ENCODE measurements at regions of chr15 and their contacts with region 1.

Region 1: DNA sequence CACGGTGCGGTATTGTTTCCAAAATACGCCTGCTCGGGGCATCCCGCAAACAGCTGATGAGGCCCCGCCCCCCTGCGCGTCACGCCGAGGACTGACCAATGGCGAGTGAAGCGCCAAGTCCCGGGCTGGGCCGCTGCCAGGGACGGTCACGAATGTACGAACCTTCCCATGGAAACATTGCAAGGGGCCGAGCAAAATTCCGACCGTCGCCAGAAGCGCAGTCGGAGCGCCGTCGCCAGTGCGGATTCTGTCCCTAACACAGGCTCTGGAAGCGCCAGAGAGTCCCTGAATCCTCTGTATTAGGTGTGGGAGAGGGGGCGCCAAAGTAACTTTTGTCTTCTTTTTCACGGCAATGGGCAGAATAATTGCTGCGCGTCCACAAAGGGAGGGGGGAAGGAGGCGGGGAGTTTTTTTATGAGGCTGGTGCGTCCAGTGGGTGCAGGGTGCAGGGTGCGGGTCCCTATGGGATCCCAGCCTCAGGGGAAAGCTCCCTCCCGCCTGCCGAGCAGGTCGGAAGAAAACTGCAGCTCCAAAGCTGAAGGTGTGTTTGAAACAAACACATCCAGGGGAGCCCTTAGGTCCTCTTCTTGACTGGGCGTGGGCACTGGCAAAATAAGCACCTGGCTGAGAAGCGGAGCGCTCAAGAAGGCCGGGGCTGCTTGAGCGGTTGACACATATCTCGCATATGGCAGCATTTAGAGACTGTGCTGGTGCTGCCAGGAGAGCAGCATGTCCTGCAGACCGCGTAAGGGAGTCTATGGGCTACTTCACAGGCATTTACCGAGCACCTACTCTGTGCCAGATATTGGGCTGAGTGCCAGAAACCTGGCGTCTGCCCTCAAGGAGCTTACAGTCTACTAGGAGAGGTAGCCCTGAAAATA is at the start of gene BMF:
- DNase-seq: peak; percentile 98
- H3K4me3 ChIP-seq: peak within 1 kb of the TSS; percentile 84
- H3K27ac ChIP-seq: peak within 1 kb of the TSS; percentile 39
- H3K27me3 ChIP-seq: peaks cover 27% of the 10 kb centered on the region
- CTCF ChIP-seq: peak; percentile 43; the same call in 1 of the 2 replicates
- polyA plus RNA-seq, gene BMF: 6.2 and 6.5 TPM in 2 replicates

Region 2: GRCh38 chr15:40044717-40045571 is 64.2 kb before region 1 on chr15:
- CTCF ChIA-PET with region 1: interaction called, 68 read pairs
- POLR2A ChIA-PET with region 1: interaction called, 10 read pairs
- DNase-seq: no peak
- H3K4me3 ChIP-seq: peak overlapping the region; percentile 31
- H3K27ac ChIP-seq: no peak overlapping the region
- H3K27me3 ChIP-seq: no peaks in the 10 kb centered on the region
- CTCF ChIP-seq: peak; percentile 93

Region 3: GRCh38 chr15:40061212-40061901 is 47.7 kb before region 1 on chr15:
- CTCF ChIA-PET with region 1: interaction called, 13 read pairs
- POLR2A ChIA-PET with region 1: interaction called, 5 read pairs
- DNase-seq: no peak
- H3K4me3 ChIP-seq: no peak overlapping the region
- H3K27ac ChIP-seq: no peak overlapping the region
- H3K27me3 ChIP-seq: no peaks in the 10 kb centered on the region
- CTCF ChIP-seq: no peak

Region 4: DNA sequence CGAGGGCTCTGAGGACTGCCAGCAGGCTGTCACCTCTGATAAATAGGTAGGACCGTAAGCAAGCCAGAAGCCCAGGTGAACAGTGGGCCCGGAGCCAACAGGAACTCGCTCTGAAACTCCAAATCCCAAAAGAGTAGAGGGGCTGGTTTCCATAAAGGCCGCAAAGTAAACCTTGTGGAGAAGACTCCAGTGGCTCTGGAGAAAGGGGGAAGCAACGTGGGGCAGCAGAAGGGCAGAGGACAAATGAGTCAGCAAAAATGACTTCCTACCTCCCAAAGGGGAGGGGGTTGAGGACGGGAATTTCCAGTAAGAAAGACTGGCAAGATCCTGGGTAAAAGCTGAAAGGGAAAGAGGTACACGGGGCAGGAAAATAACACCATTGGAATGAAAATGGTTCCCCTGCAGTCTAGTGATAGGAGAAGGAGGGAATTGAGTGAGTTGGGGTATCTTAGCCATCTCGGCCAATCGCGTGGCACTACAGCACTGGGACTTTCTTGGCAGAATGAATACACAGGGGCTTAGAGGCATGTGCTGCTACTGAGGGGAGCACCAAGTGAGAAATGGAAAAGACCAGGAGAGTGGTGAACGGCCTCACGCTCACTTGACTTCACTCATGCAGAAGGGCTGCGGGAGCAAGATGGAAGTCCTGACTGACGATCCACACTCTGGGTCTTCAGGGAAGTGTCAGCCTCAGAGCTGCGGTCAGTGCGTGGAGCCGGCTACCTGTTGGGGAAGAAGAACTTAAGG is 33.6 kb before region 1 on chr15:
- CTCF ChIA-PET with region 1: interaction called, 14 read pairs
- POLR2A ChIA-PET with region 1: interaction called, 5 read pairs
- DNase-seq: no peak
- H3K4me3 ChIP-seq: no peak overlapping the region
- H3K27ac ChIP-seq: no peak overlapping the region
- H3K27me3 ChIP-seq: no peaks in the 10 kb centered on the region
- CTCF ChIP-seq: no peak

Region 5: GRCh38 chr15:40098489-40099261 is 10.4 kb before region 1 on chr15:
- CTCF ChIA-PET with region 1: interaction called, 20 read pairs
- POLR2A ChIA-PET with region 1: interaction called, 5 read pairs
- DNase-seq: peak; percentile 93
- H3K4me3 ChIP-seq: no peak overlapping the region; the same call in 1 of the 2 replicates
- H3K27ac ChIP-seq: peak overlapping the region; percentile 94
- H3K27me3 ChIP-seq: no peaks in the 10 kb centered on the region
- CTCF ChIP-seq: no peak